ENCODE measurements at regions of chr6 and their contacts with region 1.

Region 1: GRCh38 chr6:52263709-52264540 is 19.6 kb upstream of the IL17F start:
- DNase-seq: peak; percentile 88
- H3K4me3 ChIP-seq: no peak overlapping the region
- H3K27ac ChIP-seq: no peak overlapping the region
- H3K4me1 ChIP-seq: peaks cover 0 to 8% (median 0%) of the 10 kb centered on the region in 6 donors
- H3K27me3 ChIP-seq: no peaks in the 10 kb centered on the region
- CTCF ChIP-seq: peak; percentile 47 to 96 (median 91)
- POLR2A ChIP-seq: no peak

Region 2: GRCh38 chr6:52049252-52050050 is 214.5 kb before region 1 on chr6:
- intact Hi-C with region 1: loop called (anchors 10 kb)
- DNase-seq: no peak
- H3K4me3 ChIP-seq: no peak overlapping the region
- H3K27ac ChIP-seq: no peak overlapping the region
- H3K4me1 ChIP-seq: no peaks in the 10 kb centered on the region
- H3K27me3 ChIP-seq: peaks cover 0 to 26% (median 0%) of the 10 kb centered on the region in 7 donors
- CTCF ChIP-seq: peak in 9 of 11 experiments; percentile 15 to 61 (median 49)
- POLR2A ChIP-seq: no peak

Region 3: DNA sequence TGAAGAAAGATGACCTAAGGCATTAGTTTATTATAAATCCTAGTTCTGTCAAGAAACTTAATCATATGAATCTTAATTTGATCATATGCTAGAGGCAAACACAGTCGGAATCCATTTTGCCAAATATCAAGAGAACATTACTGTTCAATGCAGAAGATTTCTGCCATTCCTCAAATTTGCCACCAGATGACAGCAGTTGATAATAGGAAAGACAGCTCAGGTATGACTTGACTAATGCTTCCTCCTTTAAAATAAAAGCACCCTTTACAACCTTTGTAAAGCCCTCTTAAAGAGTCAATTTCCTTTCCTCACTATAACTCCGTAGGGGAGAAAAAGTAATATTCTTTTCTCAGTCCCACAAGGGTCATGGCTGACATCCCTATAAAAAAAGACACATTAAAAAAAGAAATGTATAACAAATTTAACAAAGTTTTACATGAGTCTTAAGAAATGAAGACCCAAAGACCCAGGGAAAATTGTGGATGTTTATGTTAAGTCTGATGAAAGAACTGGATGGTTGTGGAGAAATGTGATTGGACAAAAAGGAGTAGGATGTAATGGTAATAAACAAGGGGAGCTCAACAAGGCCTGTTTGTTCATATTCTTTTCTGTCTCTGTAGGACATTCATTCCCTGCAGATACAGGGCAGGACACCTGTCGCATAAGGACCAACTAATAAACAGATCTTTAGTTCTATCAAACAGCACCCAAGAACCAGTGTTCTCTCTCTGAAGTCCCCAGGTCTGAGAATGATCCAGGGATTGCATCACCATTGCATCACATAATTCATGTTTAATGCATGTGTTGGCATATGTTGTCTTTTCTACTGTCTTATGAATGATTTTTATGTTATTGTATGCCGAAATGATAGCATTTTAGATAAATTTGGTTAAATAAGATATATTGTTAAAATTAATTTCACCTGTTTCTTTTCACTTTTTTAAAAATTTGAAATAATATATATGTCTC is 100.7 kb before region 1 on chr6:
- intact Hi-C with region 1: loop called (anchors 10 kb)
- DNase-seq: no peak
- H3K4me3 ChIP-seq: no peak overlapping the region
- H3K27ac ChIP-seq: no peak overlapping the region
- H3K4me1 ChIP-seq: no peaks in the 10 kb centered on the region
- H3K27me3 ChIP-seq: peaks cover 0 to 33% (median 0%) of the 10 kb centered on the region in 7 donors
- CTCF ChIP-seq: peak in 6 of 11 experiments; percentile 21 to 53 (median 32)
- POLR2A ChIP-seq: no peak

Region 4: GRCh38 chr6:52537001-52537753 is 273.3 kb after region 1 on chr6:
- intact Hi-C with region 1: no loop called
- DNase-seq: no peak
- H3K4me3 ChIP-seq: no peak overlapping the region
- H3K27ac ChIP-seq: peak overlapping the region in 6 of 8 donors; percentile 5 to 73 (median 52)
- H3K4me1 ChIP-seq: peaks cover 6 to 76% (median 31%) of the 10 kb centered on the region in 6 donors
- H3K27me3 ChIP-seq: no peaks in the 10 kb centered on the region
- CTCF ChIP-seq: no peak
- POLR2A ChIP-seq: no peak